GM10248 (cell line): ENCODE measurements at regions of chr9 and their contacts with region 1.

Region 1: GRCh38 chr9:32384364-32385151 is at the start of gene ACO1:
- DNase-seq: peak; percentile 97
- CTCF ChIP-seq: peak; percentile 28

Region 2: GRCh38 chr9:32294106-32294505 is 90.5 kb before region 1 on chr9:
- CTCF ChIA-PET with region 1: no interaction called
- POLR2A ChIA-PET with region 1: no interaction called
- DNase-seq: no peak
- CTCF ChIP-seq: no peak

Region 3: GRCh38 chr9:32395490-32396216 is 11.1 kb after region 1 on chr9:
- CTCF ChIA-PET with region 1: interaction called, 48 read pairs
- POLR2A ChIA-PET with region 1: no interaction called
- DNase-seq: no peak
- CTCF ChIP-seq: no peak

Region 4: DNA sequence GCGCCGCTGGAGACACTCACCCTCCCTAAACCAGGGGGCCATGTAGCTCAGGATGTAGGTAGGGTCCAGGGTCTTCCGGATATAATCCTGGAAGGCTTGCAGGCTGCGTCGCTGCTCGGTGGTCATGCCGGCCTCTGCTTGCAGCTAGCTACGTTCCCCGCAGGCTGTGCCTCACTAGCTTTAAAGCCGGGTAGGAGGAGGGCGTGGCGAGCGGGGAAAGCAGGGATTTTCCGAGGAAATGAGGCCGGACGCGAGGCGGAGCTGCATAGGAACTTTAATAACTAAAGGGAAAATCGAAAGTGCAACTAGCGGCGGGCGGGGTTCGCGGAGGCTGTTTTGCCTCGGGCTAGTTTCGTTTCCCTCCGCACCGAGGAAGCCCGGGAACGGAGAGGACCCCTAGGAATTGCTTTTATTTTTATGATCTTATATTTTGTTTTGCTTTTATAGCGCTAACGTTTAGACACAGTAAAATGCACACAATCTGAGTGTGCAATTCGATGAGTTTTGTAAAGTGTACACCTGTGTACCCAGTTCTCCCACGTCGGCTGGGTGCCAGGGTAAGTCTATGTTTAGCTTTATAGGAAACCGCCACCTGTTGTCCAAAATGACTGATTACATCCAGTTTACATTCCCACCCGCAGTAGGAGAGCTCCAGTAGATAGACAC is 141.6 kb after region 1 on chr9 and contains the start of gene RIGI:
- CTCF ChIA-PET with region 1: interaction called, 31 read pairs
- POLR2A ChIA-PET with region 1: interaction called, 3 read pairs
- DNase-seq: peak; percentile 58
- CTCF ChIP-seq: peak; percentile 12

Region 5: GRCh38 chr9:32571969-32572899 is 187.7 kb after region 1 on chr9:
- CTCF ChIA-PET with region 1: interaction called, 872 read pairs
- POLR2A ChIA-PET with region 1: no interaction called
- DNase-seq: peak; percentile 78
- CTCF ChIP-seq: peak; percentile 65